ENCODE measurements at regions of chr4 and their contacts with region 1.

Region 1: DNA sequence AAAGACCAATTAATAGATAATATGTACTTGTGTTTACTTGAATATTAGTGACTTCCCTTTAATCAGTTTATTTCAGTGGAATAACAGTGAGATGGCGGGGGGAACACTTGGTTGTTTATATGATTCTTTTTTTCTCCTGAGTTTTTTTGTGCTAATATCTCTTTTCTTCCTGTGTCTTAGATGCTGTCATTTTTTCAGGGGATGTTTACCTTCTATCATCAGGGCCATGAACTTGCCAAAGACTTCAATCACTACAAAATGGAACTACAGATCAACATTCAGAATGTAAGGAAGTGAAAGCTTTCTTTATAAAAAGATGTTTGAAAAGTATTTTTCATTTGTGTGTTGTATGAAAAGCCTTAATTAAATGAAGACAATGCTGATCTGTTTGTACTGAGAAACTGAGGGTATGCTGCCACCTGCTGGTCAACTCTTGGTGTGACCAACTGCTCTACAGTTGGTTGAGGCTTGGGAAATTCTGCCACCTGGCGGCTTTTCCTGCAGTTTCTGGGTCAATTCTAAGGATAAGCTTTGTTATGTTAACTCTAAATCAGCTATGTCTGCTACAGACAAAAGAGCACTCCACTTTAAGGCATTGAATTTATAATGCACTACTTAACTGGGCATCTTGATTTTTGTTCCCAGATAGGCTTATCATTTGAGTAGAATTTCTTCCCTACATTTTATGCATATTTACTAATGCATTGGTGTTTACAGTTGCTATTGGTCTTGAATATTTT is 134.8 kb downstream of the ARHGAP10 start:
- DNase-seq: peak; percentile 71 to 96 (median 89)
- ATAC-seq: peak; percentile 89 to 100 (median 98)
- H3K4me3 ChIP-seq: no peak overlapping the region
- H3K4me3 Mint-ChIP-seq: no peak overlapping the region
- H3K27ac ChIP-seq: no peak overlapping the region
- H3K27ac Mint-ChIP-seq: peak overlapping the region in 1 of 2 donors; percentile 36
- H3K4me1 ChIP-seq: no peaks in the 10 kb centered on the region
- H3K4me1 Mint-ChIP-seq: peaks cover 0 to 2% (median 0%) of the 10 kb centered on the region in 3 donors
- H3K27me3 ChIP-seq: no peaks in the 10 kb centered on the region
- H3K27me3 Mint-ChIP-seq: no peaks in the 10 kb centered on the region

Region 2: DNA sequence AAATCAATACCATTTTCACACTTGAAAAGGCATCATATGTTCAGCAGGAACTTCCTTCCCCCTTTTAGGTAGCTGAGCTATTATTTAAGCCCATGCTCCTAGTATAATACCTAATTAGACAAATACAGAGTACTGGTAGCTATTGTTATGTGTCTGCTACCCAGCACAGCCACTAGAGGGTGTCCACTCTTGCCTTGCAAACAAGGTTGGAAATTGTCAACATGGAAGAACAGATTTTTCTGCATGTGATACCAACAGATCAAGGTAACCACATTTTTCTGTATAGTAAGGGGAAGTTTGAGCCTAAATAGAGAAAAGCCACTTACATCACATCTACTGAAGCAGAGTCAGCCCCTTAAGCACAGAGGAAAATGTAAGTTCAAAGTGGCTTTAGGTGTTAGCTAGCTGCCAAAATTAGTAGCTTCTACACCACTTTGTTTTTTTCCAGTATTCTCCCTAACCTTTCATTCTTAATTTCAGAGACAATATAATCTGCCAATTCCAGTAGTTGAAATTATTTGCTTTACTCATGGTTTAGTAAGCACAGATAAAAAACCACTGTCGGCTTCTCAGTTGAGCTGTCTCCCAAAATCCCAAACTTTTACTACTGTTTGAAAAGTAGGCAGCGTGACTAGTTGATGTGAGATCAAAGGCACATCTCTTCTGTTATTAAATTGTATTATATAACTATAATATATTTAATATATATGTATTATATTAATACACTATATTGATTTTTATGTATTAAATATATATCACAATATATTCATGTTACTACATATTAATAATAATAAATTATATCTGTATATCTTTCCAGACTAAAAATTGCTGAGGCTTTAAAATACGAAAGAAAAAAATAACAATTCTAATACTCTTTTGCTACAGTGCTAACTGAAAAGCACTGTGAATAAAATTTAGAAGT is 347.6 kb before region 1 on chr4:
- CTCF ChIA-PET with region 1: interaction called, 17 to 28 read pairs
- POLR2A ChIA-PET with region 1: no interaction called
- DNase-seq: peak in 30 of 35 experiments; percentile 6 to 61 (median 26)
- ATAC-seq: peak in 1 of 4 experiments; percentile 64
- H3K4me3 ChIP-seq: no peak overlapping the region
- H3K4me3 Mint-ChIP-seq: no peak overlapping the region
- H3K27ac ChIP-seq: no peak overlapping the region
- H3K27ac Mint-ChIP-seq: no peak overlapping the region
- H3K4me1 ChIP-seq: no peaks in the 10 kb centered on the region
- H3K4me1 Mint-ChIP-seq: no peaks in the 10 kb centered on the region
- H3K27me3 ChIP-seq: peaks cover 0 to 3% of the 10 kb centered on the region in 2 experiments
- H3K27me3 Mint-ChIP-seq: peaks cover 7 to 24% of the 10 kb centered on the region in 2 donors

Region 3: GRCh38 chr4:147590249-147590920 is 276.3 kb before region 1 on chr4:
- CTCF ChIA-PET with region 1: interaction called, 3 to 20 read pairs
- POLR2A ChIA-PET with region 1: interaction called, 4 read pairs
- DNase-seq: peak in 28 of 35 experiments; percentile 1 to 56 (median 20)
- ATAC-seq: no peak
- H3K4me3 ChIP-seq: no peak overlapping the region
- H3K4me3 Mint-ChIP-seq: no peak overlapping the region
- H3K27ac ChIP-seq: no peak overlapping the region
- H3K27ac Mint-ChIP-seq: no peak overlapping the region
- H3K4me1 ChIP-seq: no peaks in the 10 kb centered on the region
- H3K4me1 Mint-ChIP-seq: peaks cover 0 to 4% (median 0%) of the 10 kb centered on the region in 3 donors
- H3K27me3 ChIP-seq: peaks cover 0 to 10% of the 10 kb centered on the region in 2 experiments
- H3K27me3 Mint-ChIP-seq: peaks cover 2 to 8% of the 10 kb centered on the region in 2 donors

Region 4: DNA sequence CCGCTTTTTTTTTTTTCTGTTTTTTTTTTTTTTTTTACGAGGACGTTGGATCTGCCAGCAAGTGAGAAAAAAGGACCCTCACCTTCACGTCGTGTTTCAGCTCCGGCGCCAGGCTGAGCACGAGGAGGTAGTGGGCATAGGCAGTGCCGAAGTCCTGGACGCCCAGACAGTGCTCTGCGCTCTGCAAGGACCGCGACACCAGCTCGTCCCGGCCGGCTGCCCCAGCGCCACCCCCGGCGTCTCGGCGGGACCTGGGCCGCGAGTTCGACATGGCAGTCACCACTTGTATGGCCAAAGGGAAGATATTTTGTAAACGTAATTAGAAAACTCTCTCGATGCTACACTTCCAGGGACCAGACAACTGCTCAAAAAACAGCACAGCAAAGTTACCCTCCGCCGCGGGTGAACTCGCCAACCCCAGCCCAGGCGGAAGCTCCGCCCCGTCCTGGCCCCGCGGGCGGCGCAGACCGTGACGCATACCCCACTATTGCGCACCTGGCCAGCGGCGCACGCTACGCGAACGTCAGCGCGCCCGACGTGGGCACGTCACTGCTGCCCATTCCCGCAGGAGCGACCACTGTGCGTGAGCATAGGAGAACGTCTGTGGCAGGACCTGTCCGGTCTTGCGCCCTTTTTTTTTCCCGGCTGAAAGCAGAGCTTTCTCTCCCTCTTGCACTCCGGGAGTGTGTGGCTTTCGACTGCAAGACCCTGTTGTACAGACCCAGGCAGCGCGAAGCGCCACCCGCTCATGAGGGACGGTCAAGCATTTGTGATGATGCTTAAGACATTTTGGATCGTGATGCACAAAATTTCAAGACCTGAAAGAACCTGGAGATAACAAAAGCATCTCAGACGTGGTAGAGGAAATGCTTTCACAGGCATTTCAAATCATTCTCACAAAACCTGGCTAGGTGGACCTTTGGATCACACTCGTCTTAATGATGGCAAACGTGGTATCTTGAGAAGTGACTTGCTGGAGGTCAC is 182.7 kb before region 1 on chr4 and contains the start of gene PRMT9:
- CTCF ChIA-PET with region 1: interaction called, 4 to 28 read pairs
- POLR2A ChIA-PET with region 1: interaction called in 1 of 2 experiments, 6 read pairs
- DNase-seq: peak; percentile 73 to 92 (median 83)
- ATAC-seq: peak; percentile 97 to 100 (median 99)
- H3K4me3 ChIP-seq: peak within 1 kb of the TSS; percentile 73 to 99
- H3K4me3 Mint-ChIP-seq: peak within 1 kb of the TSS; percentile 90 to 93 (median 93)
- H3K27ac ChIP-seq: peak within 1 kb of the TSS; percentile 87
- H3K27ac Mint-ChIP-seq: peak within 1 kb of the TSS; percentile 95
- H3K4me1 ChIP-seq: peaks cover 3 to 11% of the 10 kb centered on the region in 2 experiments
- H3K4me1 Mint-ChIP-seq: peaks cover 31 to 40% (median 33%) of the 10 kb centered on the region in 3 donors
- H3K27me3 ChIP-seq: no peaks in the 10 kb centered on the region
- H3K27me3 Mint-ChIP-seq: peaks cover 8 to 10% of the 10 kb centered on the region in 2 donors
- total RNA-seq, gene PRMT9: 9.8 to 17.3 (median 12.3) TPM

Region 5: DNA sequence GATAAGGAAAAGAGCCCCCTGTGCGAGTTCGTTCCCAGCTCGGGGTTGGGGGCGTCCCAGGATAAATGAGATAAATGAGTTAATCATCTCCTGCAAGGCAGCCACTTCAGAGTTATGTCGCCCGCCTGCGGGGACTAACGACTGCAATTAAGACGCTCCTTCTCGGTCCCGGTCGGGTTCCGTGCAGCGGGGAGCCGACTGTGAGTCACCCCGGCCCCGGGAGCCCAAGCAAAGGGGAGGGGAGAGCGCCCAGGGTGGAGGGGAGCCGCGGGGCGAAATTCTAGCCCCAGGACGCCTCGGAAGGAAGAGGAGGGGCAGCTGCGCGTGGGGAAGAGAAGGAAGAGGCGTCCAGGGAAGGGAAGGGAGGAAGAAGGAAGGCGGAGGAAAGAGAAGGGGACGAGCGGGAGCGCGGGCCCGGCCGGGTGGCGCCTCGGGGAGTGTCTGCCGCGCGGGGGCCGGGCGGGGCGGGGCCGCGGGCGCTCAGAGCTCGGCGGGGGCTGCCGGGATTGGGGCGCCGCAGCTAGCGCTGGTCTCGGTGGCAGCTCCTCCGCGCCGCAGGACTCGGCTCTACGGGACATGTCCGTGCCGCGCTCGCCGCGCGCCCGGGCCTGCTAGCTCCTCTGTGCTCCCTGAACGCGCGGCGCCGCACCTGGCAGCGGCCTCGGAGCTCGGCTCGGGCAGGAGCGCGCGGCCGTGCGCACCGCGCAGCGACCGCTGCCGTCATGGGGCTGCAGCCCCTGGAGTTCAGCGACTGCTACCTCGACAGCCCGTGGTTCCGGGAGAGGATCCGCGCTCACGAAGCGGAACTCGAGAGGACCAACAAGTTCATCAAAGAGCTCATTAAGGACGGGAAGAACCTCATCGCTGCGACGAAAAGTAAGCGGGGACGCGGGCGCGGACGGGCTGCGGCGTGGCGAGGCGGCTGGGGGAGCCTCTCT is 134.9 kb before region 1 on chr4 and contains the start of gene ARHGAP10:
- CTCF ChIA-PET with region 1: interaction called, 4 to 43 read pairs
- POLR2A ChIA-PET with region 1: no interaction called
- DNase-seq: peak; percentile 32 to 73 (median 49)
- ATAC-seq: peak; percentile 73 to 78 (median 78)
- H3K4me3 ChIP-seq: peak within 1 kb of the TSS; percentile 83 to 88
- H3K4me3 Mint-ChIP-seq: peak within 1 kb of the TSS; percentile 85 to 94 (median 91)
- H3K27ac ChIP-seq: peak within 1 kb of the TSS; percentile 87
- H3K27ac Mint-ChIP-seq: peak within 1 kb of the TSS; percentile 78 to 82
- H3K4me1 ChIP-seq: peaks cover 6 to 27% of the 10 kb centered on the region in 2 experiments
- H3K4me1 Mint-ChIP-seq: peaks cover 30 to 40% (median 37%) of the 10 kb centered on the region in 3 donors
- H3K27me3 ChIP-seq: peaks cover 0 to 3% of the 10 kb centered on the region in 2 experiments
- H3K27me3 Mint-ChIP-seq: peaks cover 0 to 4% of the 10 kb centered on the region in 2 donors
- total RNA-seq, gene ARHGAP10: 6.2 to 7.7 (median 6.8) TPM

Region 6: GRCh38 chr4:147877308-147877771 is 10.6 kb after region 1 on chr4:
- CTCF ChIA-PET with region 1: interaction called, 8 to 21 read pairs
- POLR2A ChIA-PET with region 1: no interaction called
- DNase-seq: no peak
- ATAC-seq: no peak
- H3K4me3 ChIP-seq: no peak overlapping the region
- H3K4me3 Mint-ChIP-seq: no peak overlapping the region
- H3K27ac ChIP-seq: no peak overlapping the region
- H3K27ac Mint-ChIP-seq: no peak overlapping the region
- H3K4me1 ChIP-seq: no peaks in the 10 kb centered on the region
- H3K4me1 Mint-ChIP-seq: no peaks in the 10 kb centered on the region
- H3K27me3 ChIP-seq: no peaks in the 10 kb centered on the region
- H3K27me3 Mint-ChIP-seq: no peaks in the 10 kb centered on the region

Region 7: GRCh38 chr4:147940171-147940570 is 73.5 kb after region 1 on chr4:
- CTCF ChIA-PET with region 1: no interaction called
- POLR2A ChIA-PET with region 1: no interaction called
- DNase-seq: no peak
- ATAC-seq: no peak
- H3K4me3 ChIP-seq: no peak overlapping the region
- H3K4me3 Mint-ChIP-seq: no peak overlapping the region
- H3K27ac ChIP-seq: no peak overlapping the region
- H3K27ac Mint-ChIP-seq: no peak overlapping the region
- H3K4me1 ChIP-seq: peaks cover 0 to 9% of the 10 kb centered on the region in 2 experiments
- H3K4me1 Mint-ChIP-seq: peaks cover 14 to 29% (median 29%) of the 10 kb centered on the region in 3 donors
- H3K27me3 ChIP-seq: no peaks in the 10 kb centered on the region
- H3K27me3 Mint-ChIP-seq: no peaks in the 10 kb centered on the region

Measured in T-cell (primary cell).